Heart left ventricle (tissue), 16 donors: ENCODE measurements at regions of chr10 and their contacts with region 1.

Region 1: DNA sequence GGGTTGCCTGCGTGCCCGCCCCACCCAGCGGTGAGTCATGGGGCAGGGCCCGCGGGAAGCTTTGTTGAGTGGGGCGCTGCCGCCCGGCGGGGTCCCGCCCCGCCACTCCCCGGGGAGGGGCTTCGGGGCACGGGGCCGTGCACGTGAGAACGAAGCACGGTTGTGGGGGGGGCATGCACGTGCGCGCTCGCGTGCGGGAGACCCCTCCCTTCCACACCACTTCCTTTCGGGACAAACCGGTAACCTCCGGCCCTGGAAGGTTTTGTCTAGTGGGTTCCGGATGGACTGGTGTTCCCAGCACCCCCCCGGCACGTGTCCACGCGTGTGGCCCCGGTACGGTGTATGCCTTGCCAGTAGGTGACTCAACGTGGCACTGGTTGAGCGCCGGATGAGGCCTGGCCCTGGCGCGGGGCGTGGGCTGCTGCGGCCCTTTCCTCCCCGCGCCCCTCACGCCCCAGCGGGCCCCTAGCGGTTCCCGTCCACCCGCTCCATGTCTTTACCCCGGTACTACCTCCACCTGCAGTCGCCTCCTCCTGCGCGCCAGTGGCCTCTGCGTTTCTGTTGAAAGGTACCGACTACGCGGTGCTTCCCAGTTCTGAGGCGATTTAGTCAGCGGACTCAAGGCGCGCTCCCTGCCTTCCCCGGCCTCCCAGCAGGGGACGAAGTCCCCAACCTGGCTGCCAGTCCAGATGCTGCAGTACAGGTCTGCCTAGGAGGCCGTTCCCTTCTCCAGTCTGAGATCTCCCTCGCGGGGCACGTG is 3.1 kb downstream of the ADIRF start:
- DNase-seq: peak in 4 of 5 donors; percentile 90 to 92 (median 91)
- ATAC-seq: peak; percentile 44 to 87 (median 84)
- H3K4me3 ChIP-seq: peak overlapping the region; percentile 41 to 84 (median 65)
- H3K27ac ChIP-seq: peak overlapping the region; percentile 77 to 98 (median 92)
- H3K4me1 ChIP-seq: peaks cover 7 to 58% (median 42%) of the 10 kb centered on the region in 12 donors
- H3K27me3 ChIP-seq: peaks cover 0 to 11% (median 0%) of the 10 kb centered on the region in 9 donors
- CTCF ChIP-seq: peak in 1 of 12 donors; percentile 14
- POLR2A ChIP-seq: no peak

Region 2: GRCh38 chr10:87094373-87095235 is 123.2 kb after region 1 on chr10 and contains the starts of genes GLUD1 and SHLD2:
- intact Hi-C with region 1: loop called in 3 of 10 experiments (anchors 5 to 10 kb)
- DNase-seq: peak; percentile 93 to 97 (median 95)
- ATAC-seq: peak; percentile 75 to 86 (median 84)
- H3K4me3 ChIP-seq: peak within 1 kb of the TSS; percentile 64 to 92 (median 81)
- H3K27ac ChIP-seq: peak within 1 kb of the TSS; percentile 94 to 99 (median 98)
- H3K4me1 ChIP-seq: peaks cover 0 to 51% (median 29%) of the 10 kb centered on the region in 12 donors
- H3K27me3 ChIP-seq: no peaks in the 10 kb centered on the region
- CTCF ChIP-seq: peak in 2 of 12 donors; percentile 5 to 14
- POLR2A ChIP-seq: peak in 1 of 2 donors; percentile 68
- total RNA-seq, gene GLUD1: 93.0 to 138 (median 115) TPM
- total RNA-seq, gene SHLD2: 7.1 to 17.7 (median 10.3) TPM